ENCODE measurements at regions of chr5 and their contacts with region 1.

Region 1: DNA sequence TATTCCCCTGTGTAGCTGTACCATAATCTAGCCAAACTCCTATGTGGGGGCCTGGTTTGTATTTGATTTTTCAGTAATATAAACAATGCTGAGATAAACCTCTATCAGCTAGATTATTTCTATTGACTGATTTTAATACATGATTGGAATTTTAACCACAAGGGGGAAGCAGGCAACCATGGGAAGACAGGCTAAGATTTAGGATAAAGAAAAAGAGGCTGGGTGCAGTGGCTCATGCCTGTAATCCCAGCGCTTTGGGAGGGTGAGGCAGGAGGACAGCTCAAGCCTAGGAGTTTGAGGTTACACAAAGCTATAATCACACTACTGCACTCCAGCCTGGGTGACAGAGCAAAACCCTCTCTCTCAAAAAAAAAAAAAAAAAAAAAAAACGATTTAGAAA is 18.1 kb upstream of the GPX3 start:
- DNase-seq: peak in 1 of 2 experiments; percentile 42
- H3K4me3 ChIP-seq: no peak overlapping the region
- H3K27ac ChIP-seq: no peak overlapping the region
- H3K4me1 ChIP-seq: peaks cover 0 to 3% (median 0%) of the 10 kb centered on the region in 4 experiments; a peak in 1 of 7 replicates
- H3K27me3 ChIP-seq: no peaks in the 10 kb centered on the region
- CTCF ChIP-seq: peak in 2 of 3 experiments; percentile 37 to 57; a peak in 2 of 4 replicates
- EP300 ChIP-seq: no peak
- POLR2A ChIP-seq: no peak
- RAD21 ChIP-seq: peak; percentile 73 to 78

Region 2: GRCh38 chr5:150672237-150672883 is 329.9 kb before region 1 on chr5:
- CTCF ChIA-PET with region 1: no interaction called
- POLR2A ChIA-PET with region 1: no interaction called
- DNase-seq: peak; percentile 58 to 84
- H3K4me3 ChIP-seq: peak overlapping the region; percentile 88 to 96 (median 93)
- H3K27ac ChIP-seq: peak overlapping the region; percentile 90
- H3K4me1 ChIP-seq: peaks cover 5 to 23% (median 14%) of the 10 kb centered on the region in 4 experiments
- H3K27me3 ChIP-seq: no peaks in the 10 kb centered on the region
- CTCF ChIP-seq: no peak
- EP300 ChIP-seq: no peak
- POLR2A ChIP-seq: peak in 1 of 2 experiments; percentile 52; a peak in 2 of 3 replicates
- RAD21 ChIP-seq: no peak

Region 3: DNA sequence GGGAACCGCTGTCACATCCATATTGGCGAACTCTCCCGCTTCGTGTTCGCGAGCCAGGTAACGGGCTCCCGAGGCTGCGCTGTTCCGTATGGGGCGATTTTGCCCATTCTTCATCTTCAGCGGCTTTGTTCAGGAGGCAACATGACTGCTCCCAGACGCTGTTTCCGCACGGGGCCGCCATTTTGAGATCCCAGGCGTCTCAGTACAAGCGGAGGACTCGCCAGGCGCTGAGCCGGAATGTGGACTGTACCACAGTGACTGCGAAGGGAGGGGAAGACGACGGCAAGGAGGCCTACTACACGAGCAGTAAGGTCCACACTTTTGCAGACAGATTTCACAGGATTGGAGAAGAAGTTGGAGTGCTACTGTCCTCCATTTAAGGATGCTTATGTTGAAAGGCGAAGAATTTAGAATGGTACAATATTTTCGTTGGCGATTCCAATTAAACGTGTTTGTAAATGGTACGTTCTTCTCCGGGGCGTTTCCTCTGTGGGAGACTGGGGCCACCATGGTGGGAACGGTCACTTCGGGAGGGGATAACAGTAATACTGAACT is 55.8 kb before region 1 on chr5:
- CTCF ChIA-PET with region 1: no interaction called
- POLR2A ChIA-PET with region 1: no interaction called
- DNase-seq: no peak
- H3K4me3 ChIP-seq: no peak overlapping the region
- H3K27ac ChIP-seq: no peak overlapping the region
- H3K4me1 ChIP-seq: no peaks in the 10 kb centered on the region
- H3K27me3 ChIP-seq: no peaks in the 10 kb centered on the region
- CTCF ChIP-seq: no peak
- EP300 ChIP-seq: no peak
- POLR2A ChIP-seq: no peak
- RAD21 ChIP-seq: no peak

Region 4: DNA sequence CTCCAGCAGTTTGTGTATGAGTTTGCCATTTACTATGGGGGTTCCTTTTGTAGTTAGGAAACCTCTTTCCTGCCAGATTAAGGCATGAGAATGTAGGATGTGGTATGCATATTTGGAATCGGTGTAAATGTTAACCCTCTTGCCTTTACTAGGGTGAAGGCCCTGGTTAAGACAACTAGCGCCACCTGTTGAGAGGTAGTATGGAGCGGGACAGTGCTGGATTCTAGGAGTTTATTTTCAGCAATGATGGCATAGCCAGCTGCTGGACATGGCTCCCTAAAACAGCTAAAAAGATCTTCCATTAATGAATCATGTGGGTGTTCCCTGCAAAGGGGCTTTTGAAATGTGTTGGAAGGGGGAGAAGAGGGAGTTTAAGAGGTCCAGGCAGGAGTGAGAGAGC is 12.6 kb before region 1 on chr5:
- CTCF ChIA-PET with region 1: interaction called, 10 read pairs
- POLR2A ChIA-PET with region 1: no interaction called
- DNase-seq: peak; percentile 9 to 60
- H3K4me3 ChIP-seq: no peak overlapping the region
- H3K27ac ChIP-seq: no peak overlapping the region
- H3K4me1 ChIP-seq: no peaks in the 10 kb centered on the region
- H3K27me3 ChIP-seq: no peaks in the 10 kb centered on the region
- CTCF ChIP-seq: peak; percentile 40 to 79 (median 69)
- EP300 ChIP-seq: no peak
- POLR2A ChIP-seq: no peak
- RAD21 ChIP-seq: peak; percentile 75 to 78

Region 5: GRCh38 chr5:151037561-151038411 is 35.5 kb after region 1 on chr5:
- CTCF ChIA-PET with region 1: interaction called, 30 read pairs
- POLR2A ChIA-PET with region 1: no interaction called
- DNase-seq: no peak
- H3K4me3 ChIP-seq: no peak overlapping the region
- H3K27ac ChIP-seq: no peak overlapping the region
- H3K4me1 ChIP-seq: no peaks in the 10 kb centered on the region
- H3K27me3 ChIP-seq: no peaks in the 10 kb centered on the region
- CTCF ChIP-seq: no peak
- EP300 ChIP-seq: no peak
- POLR2A ChIP-seq: no peak
- RAD21 ChIP-seq: no peak

Measured in H1 (cell line).